Naive thymus-derived CD4-positive, alpha-beta T cell (primary cell): ENCODE measurements at regions of chr18 and their contacts with region 1.

Region 1: GRCh38 chr18:25921677-25922421 is 168.6 kb downstream of the SS18 start:
- DNase-seq: peak in 6 of 9 donors; percentile 10 to 44 (median 28)
- ATAC-seq: peak; percentile 69
- H3K4me3 ChIP-seq: no peak overlapping the region
- H3K4me3 Mint-ChIP-seq: no peak overlapping the region
- H3K27ac ChIP-seq: no peak overlapping the region
- H3K27ac Mint-ChIP-seq: peak overlapping the region in 1 of 9 donors; percentile 28
- H3K4me1 ChIP-seq: no peaks in the 10 kb centered on the region
- H3K4me1 Mint-ChIP-seq: peaks cover 0 to 3% (median 0%) of the 10 kb centered on the region in 7 donors
- H3K27me3 ChIP-seq: no peaks in the 10 kb centered on the region
- H3K27me3 Mint-ChIP-seq: peaks cover 0 to 9% (median 1%) of the 10 kb centered on the region in 5 donors

Region 2: DNA sequence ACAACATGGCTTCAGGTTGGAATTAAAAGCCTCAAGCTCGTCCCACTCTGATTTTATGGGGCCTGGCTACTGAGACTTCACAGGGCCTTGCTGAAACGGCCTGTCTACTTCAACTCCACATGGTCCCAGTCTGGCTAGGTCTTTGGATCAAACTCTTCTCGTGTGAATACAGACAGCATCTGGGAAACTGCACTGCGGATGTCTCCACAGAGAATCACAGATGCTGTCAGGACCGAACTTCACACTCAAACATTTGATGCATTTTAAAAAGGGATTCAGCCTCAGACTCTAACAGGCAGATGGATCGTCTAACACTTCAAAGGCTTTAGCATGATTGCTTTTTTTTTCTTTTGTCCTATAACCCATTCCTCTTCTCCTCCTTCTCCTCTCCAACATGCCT is 768.4 kb before region 1 on chr18:
- CTCF ChIA-PET with region 1: no interaction called
- POLR2A ChIA-PET with region 1: no interaction called
- intact Hi-C with region 1: no loop called
- DNase-seq: no peak
- ATAC-seq: no peak
- H3K4me3 ChIP-seq: no peak overlapping the region
- H3K4me3 Mint-ChIP-seq: no peak overlapping the region
- H3K27ac ChIP-seq: no peak overlapping the region
- H3K27ac Mint-ChIP-seq: no peak overlapping the region
- H3K4me1 ChIP-seq: no peaks in the 10 kb centered on the region
- H3K4me1 Mint-ChIP-seq: no peaks in the 10 kb centered on the region
- H3K27me3 ChIP-seq: no peaks in the 10 kb centered on the region
- H3K27me3 Mint-ChIP-seq: peaks cover 0 to 15% (median 0%) of the 10 kb centered on the region in 5 donors

Region 3: GRCh38 chr18:25976554-25976953 is 54.7 kb after region 1 on chr18:
- CTCF ChIA-PET with region 1: no interaction called
- POLR2A ChIA-PET with region 1: no interaction called
- intact Hi-C with region 1: no loop called
- DNase-seq: no peak
- ATAC-seq: no peak
- H3K4me3 ChIP-seq: no peak overlapping the region
- H3K4me3 Mint-ChIP-seq: no peak overlapping the region
- H3K27ac ChIP-seq: no peak overlapping the region
- H3K27ac Mint-ChIP-seq: no peak overlapping the region
- H3K4me1 ChIP-seq: no peaks in the 10 kb centered on the region
- H3K4me1 Mint-ChIP-seq: peaks cover 0 to 11% (median 2%) of the 10 kb centered on the region in 7 donors
- H3K27me3 ChIP-seq: no peaks in the 10 kb centered on the region
- H3K27me3 Mint-ChIP-seq: peaks cover 0 to 3% (median 0%) of the 10 kb centered on the region in 5 donors

Region 4: DNA sequence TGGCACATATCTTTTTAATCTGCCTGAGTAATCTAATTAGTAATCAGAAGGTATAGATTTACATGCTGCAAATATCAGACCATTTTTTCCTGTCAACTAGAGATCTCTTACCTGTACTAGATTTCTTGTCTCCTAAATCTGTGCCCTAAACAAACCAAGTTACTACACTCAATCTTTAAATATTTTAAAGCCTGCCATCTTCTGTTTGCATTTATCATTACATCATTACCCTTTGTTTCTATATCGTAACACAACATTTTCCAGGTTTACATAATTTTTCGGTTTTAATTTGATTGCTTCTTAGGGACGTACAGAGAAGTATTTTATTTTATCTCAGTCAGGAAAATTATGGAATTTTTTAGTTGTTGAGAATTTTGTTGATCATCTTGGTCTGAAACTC is 237.5 kb after region 1 on chr18:
- CTCF ChIA-PET with region 1: interaction called, 3 read pairs
- POLR2A ChIA-PET with region 1: no interaction called
- intact Hi-C with region 1: loop called (anchors 1 kb)
- DNase-seq: peak in 5 of 9 donors; percentile 7 to 37 (median 17)
- ATAC-seq: no peak
- H3K4me3 ChIP-seq: no peak overlapping the region
- H3K4me3 Mint-ChIP-seq: peak overlapping the region in 1 of 10 donors; percentile 2
- H3K27ac ChIP-seq: no peak overlapping the region
- H3K27ac Mint-ChIP-seq: no peak overlapping the region
- H3K4me1 ChIP-seq: no peaks in the 10 kb centered on the region
- H3K4me1 Mint-ChIP-seq: peaks cover 0 to 7% (median 2%) of the 10 kb centered on the region in 7 donors
- H3K27me3 ChIP-seq: no peaks in the 10 kb centered on the region
- H3K27me3 Mint-ChIP-seq: peaks cover 0 to 8% (median 0%) of the 10 kb centered on the region in 5 donors